ENCODE measurements at regions of chr6 and their contacts with region 1.

Region 1: DNA sequence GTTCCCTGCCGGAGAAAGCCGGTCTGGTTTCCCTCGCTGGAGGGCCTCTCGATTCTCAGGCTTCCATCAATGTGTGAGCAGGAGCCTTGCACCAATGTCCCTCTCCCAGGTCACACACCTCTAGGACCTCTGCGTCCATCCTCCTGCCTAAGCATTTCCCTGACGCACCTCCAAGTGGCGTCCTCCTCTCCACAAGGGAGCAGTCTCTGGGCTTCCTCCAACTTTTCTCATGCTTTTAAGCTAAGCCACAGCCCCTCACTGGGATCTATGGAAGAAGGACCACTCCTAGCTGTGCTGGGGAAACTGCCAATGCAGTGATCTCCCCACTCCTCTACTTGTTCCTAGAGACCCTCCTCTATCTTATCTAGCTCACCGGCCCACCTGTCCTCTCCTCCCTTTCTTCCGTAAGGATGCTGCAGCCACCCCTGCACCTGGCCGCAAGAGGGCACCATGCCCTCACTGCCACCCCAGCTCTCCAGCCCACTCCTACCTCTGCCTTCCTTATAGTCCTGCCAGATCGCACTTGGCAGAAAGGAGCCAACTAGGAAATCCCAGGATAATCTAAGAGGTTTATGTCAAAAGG is 258.7 kb downstream of the LRFN2 start:
- DNase-seq: peak; percentile 51
- H3K4me3 ChIP-seq: no peak overlapping the region
- H3K27ac ChIP-seq: no peak overlapping the region
- H3K4me1 ChIP-seq: peaks cover 0 to 4% (median 0%) of the 10 kb centered on the region in 4 donors
- H3K27me3 ChIP-seq: peaks cover 5% of the 10 kb centered on the region
- CTCF ChIP-seq: peak; percentile 48 to 83 (median 65)
- EP300 ChIP-seq: no peak
- POLR2A ChIP-seq: no peak

Region 2: GRCh38 chr6:40804905-40805304 is 476.4 kb after region 1 on chr6:
- in situ Hi-C with region 1: loop called in 2 of 4 experiments (anchors 25 kb)
- intact Hi-C with region 1: no loop called
- DNase-seq: no peak
- H3K4me3 ChIP-seq: no peak overlapping the region
- H3K27ac ChIP-seq: peak overlapping the region in 3 of 4 donors; percentile 19 to 55 (median 40)
- H3K4me1 ChIP-seq: peaks cover 0 to 16% (median 6%) of the 10 kb centered on the region in 4 donors
- H3K27me3 ChIP-seq: no peaks in the 10 kb centered on the region
- CTCF ChIP-seq: peak in 1 of 5 experiments; percentile 23
- EP300 ChIP-seq: no peak
- POLR2A ChIP-seq: no peak

Measured in transverse colon (tissue), 4 donors.